ENCODE measurements at regions of chr11 and their contacts with region 1.

Region 1: GRCh38 chr11:123246749-123247495 is 51.9 kb upstream of the CLMP start:
- DNase-seq: peak; percentile 82
- H3K4me3 ChIP-seq: no peak overlapping the region
- H3K27ac ChIP-seq: no peak overlapping the region
- H3K4me1 ChIP-seq: no peaks in the 10 kb centered on the region
- H3K27me3 ChIP-seq: no peaks in the 10 kb centered on the region
- CTCF ChIP-seq: peak; percentile 98

Region 2: GRCh38 chr11:123110356-123110755 is 136.6 kb before region 1 on chr11:
- intact Hi-C with region 1: loop called (anchors 2 kb)
- DNase-seq: no peak
- H3K4me3 ChIP-seq: no peak overlapping the region
- H3K27ac ChIP-seq: no peak overlapping the region
- H3K4me1 ChIP-seq: no peaks in the 10 kb centered on the region
- H3K27me3 ChIP-seq: no peaks in the 10 kb centered on the region
- CTCF ChIP-seq: no peak

Region 3: GRCh38 chr11:123166071-123166559 is 80.8 kb before region 1 on chr11:
- intact Hi-C with region 1: loop called (anchors 2 kb)
- DNase-seq: peak; percentile 53
- H3K4me3 ChIP-seq: no peak overlapping the region
- H3K27ac ChIP-seq: peak overlapping the region; percentile 25
- H3K4me1 ChIP-seq: no peaks in the 10 kb centered on the region
- H3K27me3 ChIP-seq: no peaks in the 10 kb centered on the region
- CTCF ChIP-seq: peak; percentile 39

Region 4: DNA sequence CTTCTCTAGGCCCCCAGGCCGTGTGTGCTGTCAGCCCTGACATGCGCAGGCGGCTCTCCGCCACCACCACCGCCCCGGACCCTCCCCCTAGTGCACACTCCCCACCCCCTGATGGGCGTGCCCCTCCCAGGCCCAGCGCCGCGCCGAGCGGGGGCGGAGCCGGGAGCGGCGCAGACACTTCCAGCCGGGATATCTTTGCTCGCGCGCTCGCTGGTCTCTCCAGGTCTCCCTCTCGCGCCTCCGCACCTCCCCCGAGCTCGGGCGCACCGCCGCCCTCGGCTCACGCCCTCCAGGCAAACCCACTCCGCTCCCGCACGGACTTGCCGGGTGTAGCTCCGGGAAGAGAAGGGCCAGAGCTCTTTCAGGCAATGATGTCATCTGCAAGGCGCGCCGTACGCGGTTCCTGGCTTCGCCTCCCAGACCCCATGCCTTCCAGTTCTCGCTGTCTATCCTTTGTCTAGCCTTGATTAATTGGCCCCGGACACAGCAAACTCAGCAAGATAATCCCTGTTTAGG is 407.7 kb after region 1 on chr11 and contains the start of gene SCN3B:
- intact Hi-C with region 1: no loop called
- DNase-seq: peak; percentile 73
- H3K4me3 ChIP-seq: peak within 1 kb of the TSS; percentile 59
- H3K27ac ChIP-seq: no peak within 1 kb of the TSS
- H3K4me1 ChIP-seq: peaks cover 3% of the 10 kb centered on the region
- H3K27me3 ChIP-seq: no peaks in the 10 kb centered on the region
- CTCF ChIP-seq: no peak
- total RNA-seq, gene SCN3B: 0.30 to 1.2 TPM

Measured in colonic mucosa (tissue), 4 donors.